Mammary epithelial cell (primary cell): ENCODE measurements at regions of chr20 and their contacts with region 1.

Region 1: DNA sequence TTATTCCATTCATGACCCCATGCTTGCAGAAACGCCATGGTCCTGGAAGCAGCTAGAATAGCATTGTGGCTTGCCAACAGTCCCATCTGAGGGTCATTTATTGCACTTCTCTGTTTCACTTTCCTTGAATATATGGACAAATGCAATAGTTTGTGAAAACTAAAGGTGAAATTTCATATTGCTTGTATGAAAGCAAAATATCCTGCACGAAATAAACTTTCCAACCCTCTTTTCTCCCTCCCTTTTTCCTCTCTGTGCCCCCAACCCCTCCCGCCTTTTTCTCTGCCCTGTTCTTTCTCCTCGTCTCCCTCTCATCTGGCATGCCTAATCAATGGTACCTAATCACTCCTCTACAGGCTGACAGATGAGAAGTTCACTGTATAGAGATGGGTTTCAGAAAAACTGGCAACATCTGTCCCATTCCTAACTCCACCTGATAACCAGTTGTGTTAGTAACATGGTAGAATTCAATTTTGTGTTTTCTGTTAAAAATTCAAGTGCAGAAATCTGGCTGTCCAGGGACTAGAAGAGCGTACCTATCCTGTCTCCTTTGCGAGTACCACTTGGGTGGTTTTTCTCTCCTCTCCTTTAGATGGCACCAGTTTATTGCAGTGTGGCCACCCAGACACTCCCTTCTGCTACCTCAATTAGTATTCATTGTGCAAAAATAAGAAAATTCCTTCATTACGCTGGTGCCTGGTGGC is 198.6 kb downstream of the FOXA2 start:
- DNase-seq: peak; percentile 27
- H3K4me3 ChIP-seq: no peak overlapping the region
- H3K27ac ChIP-seq: no peak overlapping the region
- H3K4me1 ChIP-seq: peaks cover 62% of the 10 kb centered on the region
- H3K27me3 ChIP-seq: no peaks in the 10 kb centered on the region
- CTCF ChIP-seq: peak; percentile 32 to 56

Region 2: GRCh38 chr20:22339091-22339881 is 46.5 kb before region 1 on chr20:
- CTCF ChIA-PET with region 1: interaction called, 4 read pairs
- dilution Hi-C with region 1: no loop called
- in situ Hi-C with region 1: no loop called
- intact Hi-C with region 1: loop called (anchors 2 kb)
- DNase-seq: peak; percentile 65
- H3K4me3 ChIP-seq: no peak overlapping the region
- H3K27ac ChIP-seq: no peak overlapping the region
- H3K4me1 ChIP-seq: peaks cover 22% of the 10 kb centered on the region
- H3K27me3 ChIP-seq: no peaks in the 10 kb centered on the region
- CTCF ChIP-seq: peak; percentile 72 to 82

Region 3: GRCh38 chr20:22371843-22372242 is 13.9 kb before region 1 on chr20:
- CTCF ChIA-PET with region 1: no interaction called
- dilution Hi-C with region 1: no loop called
- in situ Hi-C with region 1: no loop called
- intact Hi-C with region 1: loop called (anchors 2 kb)
- DNase-seq: no peak
- H3K4me3 ChIP-seq: no peak overlapping the region
- H3K27ac ChIP-seq: no peak overlapping the region
- H3K4me1 ChIP-seq: peaks cover 34% of the 10 kb centered on the region
- H3K27me3 ChIP-seq: no peaks in the 10 kb centered on the region
- CTCF ChIP-seq: no peak

Region 4: GRCh38 chr20:22430154-22430745 is 44.5 kb after region 1 on chr20:
- CTCF ChIA-PET with region 1: no interaction called
- dilution Hi-C with region 1: no loop called
- in situ Hi-C with region 1: no loop called
- intact Hi-C with region 1: no loop called
- DNase-seq: no peak
- H3K4me3 ChIP-seq: no peak overlapping the region
- H3K27ac ChIP-seq: no peak overlapping the region
- H3K4me1 ChIP-seq: no peaks in the 10 kb centered on the region
- H3K27me3 ChIP-seq: no peaks in the 10 kb centered on the region
- CTCF ChIP-seq: no peak

Region 5: GRCh38 chr20:22684072-22684762 is 298.5 kb after region 1 on chr20:
- CTCF ChIA-PET with region 1: no interaction called
- dilution Hi-C with region 1: no loop called
- in situ Hi-C with region 1: no loop called
- intact Hi-C with region 1: loop called (anchors 1 kb)
- DNase-seq: peak; percentile 54
- H3K4me3 ChIP-seq: no peak overlapping the region
- H3K27ac ChIP-seq: no peak overlapping the region
- H3K4me1 ChIP-seq: no peaks in the 10 kb centered on the region
- H3K27me3 ChIP-seq: no peaks in the 10 kb centered on the region
- CTCF ChIP-seq: peak; percentile 79 to 91

Region 6: DNA sequence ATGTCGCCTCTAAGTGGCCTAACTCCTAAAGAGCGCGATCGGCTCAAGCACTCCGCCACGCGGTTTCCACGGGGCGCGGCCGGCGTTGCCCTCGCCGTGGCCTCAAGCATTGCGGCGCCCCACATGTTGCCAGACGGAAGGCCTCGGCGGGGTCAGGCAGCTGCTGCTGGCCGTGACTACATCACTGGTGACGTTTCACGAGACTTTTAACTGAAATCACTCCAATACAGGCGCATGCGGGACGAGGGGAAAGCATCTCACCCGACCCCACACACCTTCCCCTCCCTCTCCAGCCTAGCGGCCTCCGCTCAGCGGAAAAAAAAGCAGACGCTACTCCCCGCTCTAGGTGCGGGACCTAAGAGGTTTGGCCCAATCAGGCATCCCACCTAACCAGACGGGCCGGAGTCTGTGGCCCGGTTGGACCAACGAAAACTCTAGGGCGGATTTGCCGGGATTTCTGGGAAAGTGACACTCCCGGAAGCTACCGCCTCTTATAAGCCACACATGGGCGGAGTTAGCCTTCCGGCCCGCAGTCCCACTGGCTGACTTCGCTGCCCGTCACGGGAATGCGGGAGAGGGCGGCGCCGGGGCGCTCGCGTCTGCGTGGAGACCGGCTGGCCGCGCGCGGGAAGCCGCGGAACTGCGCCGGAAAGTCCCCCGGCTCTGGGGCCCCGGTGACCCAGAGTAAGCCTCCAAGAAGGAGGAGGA is 964.6 kb after region 1 on chr20 and contains the start of gene NXT1:
- CTCF ChIA-PET with region 1: no interaction called
- dilution Hi-C with region 1: no loop called
- in situ Hi-C with region 1: no loop called
- intact Hi-C with region 1: loop called (anchors 10 kb)
- DNase-seq: peak; percentile 99
- H3K4me3 ChIP-seq: peak within 1 kb of the TSS; percentile 74 to 89 (median 78)
- H3K27ac ChIP-seq: peak within 1 kb of the TSS; percentile 81
- H3K4me1 ChIP-seq: peaks cover 13% of the 10 kb centered on the region
- H3K27me3 ChIP-seq: no peaks in the 10 kb centered on the region
- CTCF ChIP-seq: peak in 1 of 2 donors; percentile 0
- total RNA-seq, gene NXT1: 22.0 to 28.5 TPM

Region 7: GRCh38 chr20:23637282-23638221 is 1251.8 kb after region 1 on chr20 and contains the start of gene CST3:
- CTCF ChIA-PET with region 1: no interaction called
- dilution Hi-C with region 1: no loop called
- in situ Hi-C with region 1: loop called in 1 of 2 experiments (anchors 25 kb)
- intact Hi-C with region 1: no loop called
- DNase-seq: peak; percentile 82
- H3K4me3 ChIP-seq: peak within 1 kb of the TSS; percentile 77 to 78 (median 78)
- H3K27ac ChIP-seq: peak within 1 kb of the TSS; percentile 81
- H3K4me1 ChIP-seq: peaks cover 38% of the 10 kb centered on the region
- H3K27me3 ChIP-seq: no peaks in the 10 kb centered on the region
- CTCF ChIP-seq: no peak
- total RNA-seq, gene CST3: 158 to 380 TPM